HCT116 (cell line): ENCODE measurements at regions of chr14 and their contacts with region 1.

Region 1: DNA sequence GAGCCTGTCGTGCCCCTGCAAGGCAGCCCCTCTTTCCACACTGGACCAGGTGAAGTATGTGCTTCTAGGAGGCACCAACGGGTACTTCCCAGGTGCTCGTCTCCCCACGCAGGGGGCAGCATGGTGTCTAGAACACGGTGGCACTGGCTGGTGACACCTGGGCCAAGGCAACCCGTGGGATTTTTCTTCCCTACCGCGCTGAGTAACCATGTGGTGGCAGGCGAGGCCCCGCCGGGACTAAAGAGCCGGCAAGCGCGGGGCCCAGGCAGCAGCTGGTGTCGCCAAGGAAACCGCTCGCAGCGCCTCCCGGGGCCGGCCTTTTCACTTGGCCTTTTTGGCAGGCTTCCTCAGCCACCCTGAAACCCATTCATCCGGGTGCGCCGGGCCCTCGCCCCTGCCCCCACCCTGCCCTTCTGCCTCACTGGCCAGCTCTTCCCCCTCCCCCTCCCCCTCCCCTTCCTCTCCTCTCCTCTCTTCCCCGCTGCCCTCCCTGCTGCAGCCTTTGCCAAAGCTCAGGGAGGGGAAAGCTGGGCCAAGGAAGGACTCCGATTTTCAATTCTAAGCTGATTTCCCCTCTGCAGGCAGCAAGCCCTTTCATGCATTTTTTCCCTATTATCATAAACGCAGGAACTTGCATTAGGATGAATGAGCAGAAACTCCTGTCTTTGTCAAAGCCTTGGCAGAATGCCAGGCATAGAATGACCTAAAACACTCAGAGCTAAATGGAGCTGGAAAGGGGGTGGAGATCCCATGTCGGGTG is 81.2 kb downstream of the IRF2BPL start:
- DNase-seq: peak; percentile 87
- ATAC-seq: peak; percentile 88
- H3K4me3 ChIP-seq: peak overlapping the region in 1 of 2 experiments; percentile 35; a peak in 2 of 4 replicates
- H3K27ac ChIP-seq: peak overlapping the region; percentile 97
- H3K4me1 ChIP-seq: peaks cover 67 to 76% of the 10 kb centered on the region in 2 experiments
- H3K27me3 ChIP-seq: no peaks in the 10 kb centered on the region
- CTCF ChIP-seq: peak in 2 of 3 experiments; percentile 42 to 51; a peak in 4 of 6 replicates
- POLR2A ChIP-seq: no peak
- RAD21 ChIP-seq: no peak

Region 2: DNA sequence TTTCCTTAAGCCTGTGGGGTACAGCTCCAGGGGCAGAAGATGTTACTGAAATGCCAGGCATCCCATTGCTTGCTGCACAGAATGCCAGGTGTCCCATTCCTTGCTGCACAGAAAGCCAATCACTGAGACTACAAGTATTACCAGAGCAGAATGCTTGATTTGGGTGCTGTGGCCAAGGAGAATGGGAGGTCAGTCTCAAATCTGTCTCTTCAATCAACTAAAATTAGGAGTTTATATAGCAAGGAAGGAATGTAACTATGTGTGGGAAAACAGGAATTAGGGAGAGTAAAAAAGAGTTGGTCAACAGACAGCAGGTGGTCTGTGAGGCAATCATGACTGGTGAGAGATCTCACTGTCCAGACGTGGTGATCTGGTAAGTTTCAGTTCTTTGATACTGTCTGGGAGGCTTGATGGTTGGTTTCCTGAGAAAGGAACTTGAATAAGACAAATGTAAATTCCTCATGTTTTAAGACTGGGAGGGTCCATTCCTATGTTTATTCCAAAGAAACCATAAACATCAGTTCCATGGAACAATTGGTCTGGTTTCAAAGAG is 217.2 kb before region 1 on chr14:
- CTCF ChIA-PET with region 1: no interaction called
- POLR2A ChIA-PET with region 1: no interaction called
- RAD21 ChIA-PET with region 1: no interaction called
- intact Hi-C with region 1: no loop called
- DNase-seq: no peak
- ATAC-seq: no peak
- H3K4me3 ChIP-seq: no peak overlapping the region
- H3K27ac ChIP-seq: no peak overlapping the region
- H3K4me1 ChIP-seq: no peaks in the 10 kb centered on the region
- H3K27me3 ChIP-seq: no peaks in the 10 kb centered on the region
- CTCF ChIP-seq: no peak
- POLR2A ChIP-seq: no peak
- RAD21 ChIP-seq: no peak

Region 3: GRCh38 chr14:77059276-77059915 is 112.1 kb after region 1 on chr14:
- CTCF ChIA-PET with region 1: interaction called, 3 read pairs
- POLR2A ChIA-PET with region 1: no interaction called
- RAD21 ChIA-PET with region 1: no interaction called
- intact Hi-C with region 1: loop called (anchors 2 kb)
- DNase-seq: peak; percentile 67
- ATAC-seq: peak; percentile 98
- H3K4me3 ChIP-seq: no peak overlapping the region
- H3K27ac ChIP-seq: peak overlapping the region; percentile 40; the same call in 1 of the 2 replicates
- H3K4me1 ChIP-seq: peaks cover 15 to 31% of the 10 kb centered on the region in 2 experiments
- H3K27me3 ChIP-seq: no peaks in the 10 kb centered on the region
- CTCF ChIP-seq: peak in 2 of 3 experiments; percentile 34 to 37; a peak in 4 of 6 replicates
- POLR2A ChIP-seq: no peak
- RAD21 ChIP-seq: no peak

Region 4: DNA sequence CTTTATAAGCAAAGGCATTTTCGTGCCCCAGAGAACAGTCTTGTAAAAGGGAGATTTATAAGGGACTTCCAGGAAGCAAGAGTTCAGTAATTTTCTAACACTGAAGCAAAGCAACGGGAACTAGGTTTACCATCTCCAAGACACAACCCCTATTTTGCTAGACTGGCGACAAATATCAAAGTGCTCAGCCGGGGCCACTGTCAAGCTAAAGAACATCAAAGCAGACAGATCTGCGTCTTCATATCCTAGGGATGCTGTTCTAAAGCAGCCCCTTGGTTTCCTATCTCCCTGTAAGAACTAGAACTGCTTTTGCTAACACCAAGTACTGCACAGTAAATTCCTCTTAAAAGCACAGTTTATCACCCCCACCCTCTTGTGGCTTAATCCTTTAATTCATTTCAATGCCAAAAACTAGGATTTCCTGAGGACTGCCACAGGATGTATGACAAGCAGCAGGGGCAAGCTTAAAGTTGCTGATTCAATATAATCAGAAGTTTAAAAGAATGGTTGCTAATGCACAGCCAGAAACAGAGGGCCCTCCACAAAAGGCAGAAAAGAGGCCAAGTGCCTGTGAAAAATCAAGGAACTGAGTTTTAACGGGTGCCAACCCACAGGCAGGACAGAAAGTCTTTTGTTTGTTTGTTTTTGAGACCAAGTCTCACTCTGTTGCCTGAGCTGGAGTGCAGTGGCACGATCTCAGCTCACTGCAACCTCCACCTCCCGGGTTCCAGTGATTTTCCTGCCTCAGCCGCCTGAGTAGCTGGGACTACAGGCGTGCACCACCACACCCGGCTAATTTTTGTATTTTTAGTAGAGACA is 595.4 kb after region 1 on chr14:
- CTCF ChIA-PET with region 1: no interaction called
- POLR2A ChIA-PET with region 1: no interaction called
- RAD21 ChIA-PET with region 1: no interaction called
- intact Hi-C with region 1: no loop called
- DNase-seq: no peak
- ATAC-seq: no peak
- H3K4me3 ChIP-seq: no peak overlapping the region
- H3K27ac ChIP-seq: no peak overlapping the region
- H3K4me1 ChIP-seq: no peaks in the 10 kb centered on the region
- H3K27me3 ChIP-seq: no peaks in the 10 kb centered on the region
- CTCF ChIP-seq: no peak
- POLR2A ChIP-seq: no peak
- RAD21 ChIP-seq: no peak